Activated naive CD4-positive, alpha-beta T cell treated with anti-CD3 and anti-CD28 coated beads, Interleukin-2, amount 10 ng/mL, durations not matched to agents 7 days and 5 days (primary cell): ENCODE measurements at regions of chr14 and their contacts with region 1.

Region 1: GRCh38 chr14:106564058-106564656 is 1037.8 kb downstream of the TMEM121 start:
- DNase-seq: peak; percentile 80
- H3K4me3 Mint-ChIP-seq: no peak overlapping the region
- H3K27ac Mint-ChIP-seq: no peak overlapping the region
- H3K4me1 Mint-ChIP-seq: no peaks in the 10 kb centered on the region
- H3K27me3 Mint-ChIP-seq: peaks cover 46% of the 10 kb centered on the region

Region 2: DNA sequence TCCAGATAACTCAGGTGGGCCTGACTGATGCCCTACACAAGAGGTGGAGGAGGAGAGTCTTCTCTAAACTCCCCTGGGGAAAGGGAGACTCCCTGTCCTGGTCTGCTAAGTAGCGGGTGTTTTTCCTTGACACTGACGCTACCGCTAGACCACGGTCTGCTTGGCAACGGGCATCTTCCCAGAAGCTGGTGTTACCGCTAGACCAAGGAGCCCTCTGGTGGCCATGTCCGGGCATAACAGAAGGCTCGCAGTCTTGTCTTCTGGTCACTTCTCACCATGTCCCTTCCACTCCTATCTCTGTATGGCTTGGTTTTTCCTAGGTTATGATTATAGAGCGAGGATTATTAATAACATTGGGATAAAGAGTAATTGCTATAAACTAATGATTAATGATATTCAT is 72.3 kb before region 1 on chr14:
- CTCF ChIA-PET with region 1: no interaction called
- DNase-seq: peak; percentile 44
- H3K4me3 Mint-ChIP-seq: no peak overlapping the region
- H3K27ac Mint-ChIP-seq: no peak overlapping the region
- H3K4me1 Mint-ChIP-seq: peaks cover 11% of the 10 kb centered on the region
- H3K27me3 Mint-ChIP-seq: peaks cover 3% of the 10 kb centered on the region

Region 3: DNA sequence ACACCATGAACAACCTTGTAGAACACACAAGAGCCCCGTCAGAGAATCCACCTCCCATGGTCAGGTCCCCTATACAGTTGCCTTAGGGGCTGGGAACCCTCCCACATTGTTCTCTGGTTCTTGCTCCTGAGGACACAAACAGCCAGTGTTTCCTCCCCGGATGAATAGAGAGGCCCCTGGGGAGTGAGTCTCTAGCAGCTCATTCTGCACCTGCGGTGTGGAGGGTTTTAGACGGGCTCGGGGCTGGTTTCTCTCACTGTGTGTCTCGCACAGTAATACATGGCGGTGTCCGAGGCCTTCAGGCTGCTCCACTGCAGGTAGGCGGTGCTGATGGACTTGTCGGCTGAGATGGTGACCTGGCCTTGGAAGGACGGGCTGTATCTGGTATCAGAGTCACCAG is 14.3 kb after region 1 on chr14:
- CTCF ChIA-PET with region 1: interaction called, 13 read pairs
- DNase-seq: no peak
- H3K4me3 Mint-ChIP-seq: no peak overlapping the region
- H3K27ac Mint-ChIP-seq: no peak overlapping the region
- H3K4me1 Mint-ChIP-seq: no peaks in the 10 kb centered on the region
- H3K27me3 Mint-ChIP-seq: peaks cover 52% of the 10 kb centered on the region

Region 4: GRCh38 chr14:106586098-106586704 is 22.0 kb after region 1 on chr14:
- CTCF ChIA-PET with region 1: interaction called, 29 read pairs
- DNase-seq: peak; percentile 79
- H3K4me3 Mint-ChIP-seq: no peak overlapping the region
- H3K27ac Mint-ChIP-seq: no peak overlapping the region
- H3K4me1 Mint-ChIP-seq: peaks cover 4% of the 10 kb centered on the region
- H3K27me3 Mint-ChIP-seq: peaks cover 46% of the 10 kb centered on the region

Region 5: DNA sequence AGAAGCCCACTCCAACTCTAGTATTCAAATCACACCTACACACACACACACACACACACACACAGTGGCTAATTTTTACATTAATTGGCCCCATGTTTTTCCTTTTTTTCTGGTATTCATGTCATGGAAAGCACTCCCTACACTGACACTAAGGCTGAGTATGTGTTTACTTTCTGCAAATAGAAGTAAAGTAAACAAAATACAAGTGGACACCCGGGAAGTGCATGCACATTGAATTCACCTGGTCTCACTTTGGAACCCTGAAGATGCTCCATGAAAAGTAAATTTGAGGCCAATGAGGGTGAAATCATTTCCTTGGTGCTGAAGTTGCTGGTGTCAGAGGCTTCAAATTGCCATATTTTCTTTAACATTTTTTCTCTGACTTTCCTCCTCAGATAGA is 47.1 kb after region 1 on chr14:
- CTCF ChIA-PET with region 1: no interaction called
- DNase-seq: no peak
- H3K4me3 Mint-ChIP-seq: no peak overlapping the region
- H3K27ac Mint-ChIP-seq: no peak overlapping the region
- H3K4me1 Mint-ChIP-seq: peaks cover 3% of the 10 kb centered on the region
- H3K27me3 Mint-ChIP-seq: peaks cover 34% of the 10 kb centered on the region